GM12878 (cell line): ENCODE measurements at regions of chr19 and their contacts with region 1.

Region 1: DNA sequence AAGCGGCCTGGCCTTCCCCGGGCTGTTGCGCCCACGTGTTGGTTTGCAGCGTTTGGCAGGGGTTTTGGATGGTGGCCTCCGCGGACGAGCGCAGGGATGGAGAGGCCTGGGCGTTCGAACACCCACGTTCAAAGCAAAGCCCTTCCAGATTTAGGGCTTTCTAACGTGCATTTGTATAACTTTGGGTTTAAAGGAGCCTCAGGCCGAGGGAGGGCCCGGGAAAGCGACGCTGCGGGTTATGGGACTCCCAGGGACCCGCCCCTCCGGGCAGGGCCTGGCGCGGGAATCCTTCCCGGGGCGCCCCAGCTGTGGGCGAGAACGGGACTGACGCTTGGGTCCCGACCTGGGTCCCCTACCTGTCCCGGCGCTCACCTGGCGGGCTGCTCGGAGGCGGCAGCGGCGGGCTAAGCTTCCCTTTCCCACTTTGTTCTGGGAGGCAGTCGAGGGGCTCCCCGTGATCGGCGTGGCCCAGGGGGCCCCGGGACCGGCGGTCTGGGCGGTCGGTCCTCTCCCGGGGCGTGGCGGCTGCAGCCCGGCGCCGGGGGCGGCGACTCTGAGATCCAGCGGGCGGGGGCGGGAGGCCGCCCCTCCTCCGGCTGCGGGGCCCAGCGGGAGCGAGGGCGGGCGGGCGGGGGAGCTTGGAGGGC is at the start of gene FBXO17:
- DNase-seq: no peak
- ATAC-seq: peak; percentile 50
- H3K4me3 ChIP-seq: no peak within 1 kb of the TSS
- H3K27ac ChIP-seq: no peak within 1 kb of the TSS
- H3K4me1 ChIP-seq: peaks cover 21% of the 10 kb centered on the region
- H3K27me3 ChIP-seq: peaks cover 0 to 3% of the 10 kb centered on the region in 2 experiments; a peak in 2 of 4 replicates
- CTCF ChIP-seq: no peak
- EP300 ChIP-seq: no peak
- POLR2A ChIP-seq: no peak
- RAD21 ChIP-seq: no peak
- polyA plus RNA-seq, gene FBXO17: 2.2 to 2.4 TPM

Region 2: GRCh38 chr19:38842439-38843174 is 132.7 kb before region 1 on chr19:
- CTCF ChIA-PET with region 1: no interaction called
- POLR2A ChIA-PET with region 1: no interaction called
- RAD21 ChIA-PET with region 1: no interaction called
- SMC1A ChIA-PET with region 1: no interaction called
- in situ Hi-C with region 1: no loop called
- intact Hi-C with region 1: no loop called
- DNase-seq: no peak
- ATAC-seq: peak; percentile 51
- H3K4me3 ChIP-seq: 0 out of 2 replicates have a peak overlapping the region, but pooled peaks have one; percentile 8
- H3K27ac ChIP-seq: no peak overlapping the region
- H3K4me1 ChIP-seq: peaks cover 25% of the 10 kb centered on the region
- H3K27me3 ChIP-seq: no peaks in the 10 kb centered on the region
- CTCF ChIP-seq: no peak
- EP300 ChIP-seq: no peak
- POLR2A ChIP-seq: peak; percentile 31; the same call in 1 of the 2 replicates
- RAD21 ChIP-seq: no peak

Region 3: GRCh38 chr19:38944981-38945506 is 30.3 kb before region 1 on chr19:
- CTCF ChIA-PET with region 1: no interaction called
- POLR2A ChIA-PET with region 1: no interaction called
- RAD21 ChIA-PET with region 1: no interaction called
- SMC1A ChIA-PET with region 1: no interaction called
- in situ Hi-C with region 1: no loop called
- intact Hi-C with region 1: no loop called
- DNase-seq: no peak
- ATAC-seq: no peak
- H3K4me3 ChIP-seq: no peak overlapping the region
- H3K27ac ChIP-seq: no peak overlapping the region
- H3K4me1 ChIP-seq: no peaks in the 10 kb centered on the region
- H3K27me3 ChIP-seq: no peaks in the 10 kb centered on the region; a peak in 1 of 4 replicates
- CTCF ChIP-seq: no peak
- EP300 ChIP-seq: no peak
- POLR2A ChIP-seq: no peak
- RAD21 ChIP-seq: no peak

Region 4: GRCh38 chr19:38964738-38965137 is 10.6 kb before region 1 on chr19:
- CTCF ChIA-PET with region 1: interaction called, 28 read pairs
- POLR2A ChIA-PET with region 1: interaction called, 3 read pairs
- RAD21 ChIA-PET with region 1: interaction called, 10 read pairs
- SMC1A ChIA-PET with region 1: interaction called, 18 read pairs
- in situ Hi-C with region 1: no loop called
- intact Hi-C with region 1: no loop called
- DNase-seq: no peak
- ATAC-seq: no peak
- H3K4me3 ChIP-seq: no peak overlapping the region
- H3K27ac ChIP-seq: no peak overlapping the region
- H3K4me1 ChIP-seq: no peaks in the 10 kb centered on the region
- H3K27me3 ChIP-seq: no peaks in the 10 kb centered on the region
- CTCF ChIP-seq: no peak
- EP300 ChIP-seq: no peak
- POLR2A ChIP-seq: no peak
- RAD21 ChIP-seq: no peak

Region 5: GRCh38 chr19:39001041-39001440 is 25.7 kb after region 1 on chr19:
- CTCF ChIA-PET with region 1: interaction called, 20 read pairs
- POLR2A ChIA-PET with region 1: interaction called, 15 read pairs
- RAD21 ChIA-PET with region 1: interaction called, 6 read pairs
- SMC1A ChIA-PET with region 1: interaction called, 20 read pairs
- in situ Hi-C with region 1: no loop called
- intact Hi-C with region 1: loop called (anchors 1 kb)
- DNase-seq: no peak
- ATAC-seq: no peak
- H3K4me3 ChIP-seq: no peak overlapping the region
- H3K27ac ChIP-seq: no peak overlapping the region
- H3K4me1 ChIP-seq: peaks cover 12% of the 10 kb centered on the region
- H3K27me3 ChIP-seq: no peaks in the 10 kb centered on the region
- CTCF ChIP-seq: no peak
- EP300 ChIP-seq: no peak
- POLR2A ChIP-seq: no peak
- RAD21 ChIP-seq: no peak

Region 6: GRCh38 chr19:39021063-39021462 is 45.7 kb after region 1 on chr19:
- CTCF ChIA-PET with region 1: interaction called, 5 read pairs
- POLR2A ChIA-PET with region 1: interaction called, 10 read pairs
- RAD21 ChIA-PET with region 1: interaction called, 5 read pairs
- SMC1A ChIA-PET with region 1: interaction called, 6 read pairs
- in situ Hi-C with region 1: no loop called
- intact Hi-C with region 1: loop called (anchors 5 kb)
- DNase-seq: peak; percentile 48
- ATAC-seq: peak; percentile 95
- H3K4me3 ChIP-seq: no peak overlapping the region
- H3K27ac ChIP-seq: no peak overlapping the region
- H3K4me1 ChIP-seq: peaks cover 23% of the 10 kb centered on the region
- H3K27me3 ChIP-seq: no peaks in the 10 kb centered on the region
- CTCF ChIP-seq: no peak
- EP300 ChIP-seq: peak; percentile 63 to 76; a peak in 3 of 4 replicates
- POLR2A ChIP-seq: no peak
- RAD21 ChIP-seq: no peak

Region 7: GRCh38 chr19:39397360-39398296 is 422.3 kb after region 1 on chr19:
- CTCF ChIA-PET with region 1: interaction called, 3 read pairs
- POLR2A ChIA-PET with region 1: no interaction called
- RAD21 ChIA-PET with region 1: no interaction called
- SMC1A ChIA-PET with region 1: no interaction called
- in situ Hi-C with region 1: no loop called
- intact Hi-C with region 1: loop called (anchors 10 kb)
- DNase-seq: no peak
- ATAC-seq: peak; percentile 78
- H3K4me3 ChIP-seq: peak overlapping the region; percentile 26
- H3K27ac ChIP-seq: peak overlapping the region; percentile 99
- H3K4me1 ChIP-seq: peaks cover 54% of the 10 kb centered on the region
- H3K27me3 ChIP-seq: no peaks in the 10 kb centered on the region
- CTCF ChIP-seq: peak; percentile 97 to 98 (median 98); a peak in 5 of 6 replicates
- EP300 ChIP-seq: peak in 1 of 2 experiments; percentile 4; a peak in 1 of 4 replicates
- POLR2A ChIP-seq: no peak; the same call in 1 of the 2 replicates
- RAD21 ChIP-seq: peak; percentile 94